ENCODE measurements at regions of chr1 and their contacts with region 1.

Region 1: GRCh38 chr1:154220071-154220969 is at the start of gene UBAP2L:
- DNase-seq: peak; percentile 92 to 99 (median 99)
- ATAC-seq: peak; percentile 91
- H3K4me3 ChIP-seq: peak within 1 kb of the TSS; percentile 95
- H3K4me3 Mint-ChIP-seq: peak within 1 kb of the TSS; percentile 83 to 100 (median 98)
- H3K27ac ChIP-seq: peak within 1 kb of the TSS; percentile 99
- H3K27ac Mint-ChIP-seq: peak within 1 kb of the TSS; percentile 96 to 100 (median 99)
- H3K4me1 ChIP-seq: peaks cover 42 to 45% of the 10 kb centered on the region in 2 donors
- H3K4me1 Mint-ChIP-seq: peaks cover 46 to 76% (median 64%) of the 10 kb centered on the region in 7 donors
- H3K27me3 ChIP-seq: no peaks in the 10 kb centered on the region
- H3K27me3 Mint-ChIP-seq: peaks cover 0 to 4% (median 0%) of the 10 kb centered on the region in 5 donors
- total RNA-seq, gene UBAP2L: 183 to 235 (median 189) TPM

Region 2: GRCh38 chr1:152960452-152961044 is 1259.8 kb before region 1 on chr1:
- CTCF ChIA-PET with region 1: no interaction called
- POLR2A ChIA-PET with region 1: no interaction called
- intact Hi-C with region 1: no loop called
- DNase-seq: no peak
- ATAC-seq: no peak
- H3K4me3 ChIP-seq: no peak overlapping the region
- H3K4me3 Mint-ChIP-seq: no peak overlapping the region
- H3K27ac ChIP-seq: no peak overlapping the region
- H3K27ac Mint-ChIP-seq: no peak overlapping the region
- H3K4me1 ChIP-seq: no peaks in the 10 kb centered on the region
- H3K4me1 Mint-ChIP-seq: no peaks in the 10 kb centered on the region
- H3K27me3 ChIP-seq: no peaks in the 10 kb centered on the region
- H3K27me3 Mint-ChIP-seq: peaks cover 0 to 26% (median 10%) of the 10 kb centered on the region in 5 donors

Region 3: GRCh38 chr1:153633716-153634665 is 586.3 kb before region 1 on chr1 and contains the start of gene CHTOP:
- CTCF ChIA-PET with region 1: no interaction called
- POLR2A ChIA-PET with region 1: interaction called, 4 read pairs
- intact Hi-C with region 1: loop called in 1 of 2 experiments (anchors 1 kb)
- DNase-seq: peak; percentile 96 to 99 (median 96)
- ATAC-seq: peak; percentile 95
- H3K4me3 ChIP-seq: peak within 1 kb of the TSS; percentile 99
- H3K4me3 Mint-ChIP-seq: peak within 1 kb of the TSS; percentile 97 to 100 (median 99)
- H3K27ac ChIP-seq: peak within 1 kb of the TSS; percentile 98
- H3K27ac Mint-ChIP-seq: peak within 1 kb of the TSS; percentile 98 to 100 (median 100)
- H3K4me1 ChIP-seq: peaks cover 11 to 25% of the 10 kb centered on the region in 2 donors
- H3K4me1 Mint-ChIP-seq: peaks cover 30 to 52% (median 41%) of the 10 kb centered on the region in 7 donors
- H3K27me3 ChIP-seq: no peaks in the 10 kb centered on the region
- H3K27me3 Mint-ChIP-seq: peaks cover 0 to 3% (median 0%) of the 10 kb centered on the region in 5 donors
- total RNA-seq, gene CHTOP: 85.2 to 143 (median 116) TPM

Region 4: GRCh38 chr1:153775458-153776327 is 444.6 kb before region 1 on chr1:
- CTCF ChIA-PET with region 1: no interaction called
- POLR2A ChIA-PET with region 1: no interaction called
- intact Hi-C with region 1: loop called in 1 of 2 experiments (anchors 2 kb)
- DNase-seq: peak; percentile 40 to 63 (median 59)
- ATAC-seq: peak; percentile 76
- H3K4me3 ChIP-seq: peak overlapping the region; percentile 73
- H3K4me3 Mint-ChIP-seq: peak overlapping the region; percentile 77 to 89 (median 86)
- H3K27ac ChIP-seq: peak overlapping the region; percentile 66
- H3K27ac Mint-ChIP-seq: peak overlapping the region in 7 of 9 donors; percentile 29 to 80 (median 68)
- H3K4me1 ChIP-seq: peaks cover 6 to 23% of the 10 kb centered on the region in 2 donors
- H3K4me1 Mint-ChIP-seq: peaks cover 14 to 35% (median 26%) of the 10 kb centered on the region in 7 donors
- H3K27me3 ChIP-seq: no peaks in the 10 kb centered on the region
- H3K27me3 Mint-ChIP-seq: no peaks in the 10 kb centered on the region

Region 5: GRCh38 chr1:153958111-153958960 is 262.0 kb before region 1 on chr1 and contains the start of gene CRTC2:
- CTCF ChIA-PET with region 1: no interaction called
- POLR2A ChIA-PET with region 1: interaction called, 3 read pairs
- intact Hi-C with region 1: loop called in 1 of 2 experiments (anchors 1 kb)
- DNase-seq: peak; percentile 86 to 99 (median 96)
- ATAC-seq: peak; percentile 94
- H3K4me3 ChIP-seq: peak within 1 kb of the TSS; percentile 74
- H3K4me3 Mint-ChIP-seq: peak within 1 kb of the TSS; percentile 91 to 100 (median 97)
- H3K27ac ChIP-seq: peak within 1 kb of the TSS; percentile 92
- H3K27ac Mint-ChIP-seq: peak within 1 kb of the TSS; percentile 89 to 98 (median 94)
- H3K4me1 ChIP-seq: peaks cover 36% of the 10 kb centered on the region in 2 donors
- H3K4me1 Mint-ChIP-seq: peaks cover 34 to 71% (median 67%) of the 10 kb centered on the region in 7 donors
- H3K27me3 ChIP-seq: no peaks in the 10 kb centered on the region
- H3K27me3 Mint-ChIP-seq: no peaks in the 10 kb centered on the region
- total RNA-seq, gene CRTC2: 86.1 to 157 (median 119) TPM

Region 6: DNA sequence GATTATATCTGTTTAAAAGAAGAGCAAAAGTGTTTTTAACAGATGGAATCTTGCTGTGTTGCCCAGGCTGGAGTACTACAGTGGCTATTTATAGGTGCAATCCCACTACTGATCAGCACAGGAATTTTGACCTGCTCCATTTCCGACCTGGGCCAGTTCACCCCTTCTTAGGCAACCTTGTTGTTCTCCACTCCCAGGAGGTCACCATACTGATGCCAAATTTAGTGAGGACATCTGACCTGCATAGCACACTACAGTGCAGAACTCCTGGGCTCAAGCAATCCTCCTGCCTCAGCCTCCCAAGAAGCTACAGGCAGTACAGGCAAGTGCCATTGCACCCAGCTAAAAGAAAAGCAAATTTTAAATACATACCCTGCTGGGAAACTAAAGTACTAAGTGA is 54.1 kb before region 1 on chr1:
- CTCF ChIA-PET with region 1: no interaction called
- POLR2A ChIA-PET with region 1: no interaction called
- intact Hi-C with region 1: no loop called
- DNase-seq: no peak
- ATAC-seq: no peak
- H3K4me3 ChIP-seq: no peak overlapping the region
- H3K4me3 Mint-ChIP-seq: no peak overlapping the region
- H3K27ac ChIP-seq: no peak overlapping the region
- H3K27ac Mint-ChIP-seq: peak overlapping the region in 3 of 9 donors; percentile 33 to 56 (median 51)
- H3K4me1 ChIP-seq: peaks cover 0 to 4% of the 10 kb centered on the region in 2 donors
- H3K4me1 Mint-ChIP-seq: peaks cover 7 to 48% (median 40%) of the 10 kb centered on the region in 7 donors
- H3K27me3 ChIP-seq: no peaks in the 10 kb centered on the region
- H3K27me3 Mint-ChIP-seq: no peaks in the 10 kb centered on the region

Region 7: GRCh38 chr1:154198756-154199562 is 21.4 kb before region 1 on chr1:
- CTCF ChIA-PET with region 1: interaction called, 6 read pairs
- POLR2A ChIA-PET with region 1: interaction called, 4 read pairs
- intact Hi-C with region 1: loop called in 1 of 2 experiments (anchors 1 kb)
- DNase-seq: peak in 7 of 9 donors; percentile 44 to 66 (median 61)
- ATAC-seq: peak; percentile 91
- H3K4me3 ChIP-seq: no peak overlapping the region
- H3K4me3 Mint-ChIP-seq: no peak overlapping the region
- H3K27ac ChIP-seq: no peak overlapping the region
- H3K27ac Mint-ChIP-seq: peak overlapping the region in 1 of 9 donors; percentile 69
- H3K4me1 ChIP-seq: no peaks in the 10 kb centered on the region
- H3K4me1 Mint-ChIP-seq: peaks cover 0 to 4% (median 0%) of the 10 kb centered on the region in 7 donors
- H3K27me3 ChIP-seq: no peaks in the 10 kb centered on the region
- H3K27me3 Mint-ChIP-seq: peaks cover 0 to 7% (median 0%) of the 10 kb centered on the region in 5 donors

Region 8: DNA sequence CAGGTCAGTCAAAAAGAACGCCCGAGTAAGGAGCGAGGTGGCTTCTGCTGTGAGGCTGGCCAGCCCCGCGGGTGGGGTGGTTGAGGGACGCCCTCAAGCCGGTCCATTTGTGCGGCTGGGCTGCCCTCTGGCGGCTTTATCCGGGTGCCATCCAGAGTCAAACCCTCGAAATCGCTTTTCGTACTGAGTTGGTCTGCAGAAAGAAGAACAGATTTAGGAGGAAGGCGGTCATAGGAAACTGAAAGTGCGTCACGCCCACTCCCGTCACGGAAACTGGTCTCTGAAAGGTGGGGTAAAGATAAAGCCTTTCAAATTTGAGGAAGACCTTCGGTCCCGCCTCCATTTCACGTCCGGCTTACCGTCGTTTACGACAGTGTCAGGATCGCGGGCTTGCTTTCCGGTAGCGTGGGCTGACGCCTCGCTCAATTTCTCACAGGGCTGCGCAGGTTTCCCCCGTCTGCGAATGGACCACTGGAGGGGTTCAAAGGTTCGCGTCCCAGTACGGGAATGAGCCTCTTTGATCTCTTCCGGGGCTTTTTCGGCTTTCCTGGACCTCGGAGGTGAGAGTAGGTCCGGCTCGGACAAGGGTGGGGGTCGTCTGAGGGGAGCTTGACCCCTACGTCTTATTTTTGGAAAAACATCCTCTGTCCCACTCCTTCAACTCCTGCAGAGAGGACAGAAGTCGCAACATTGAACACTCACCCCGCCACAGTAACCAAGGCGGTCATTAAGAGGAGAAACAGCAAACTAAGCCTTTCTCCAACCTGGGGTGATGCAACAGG is 52.1 kb after region 1 on chr1 and contains the start of gene HAX1:
- CTCF ChIA-PET with region 1: interaction called, 3 read pairs
- POLR2A ChIA-PET with region 1: interaction called, 6 read pairs
- intact Hi-C with region 1: loop called (anchors 1 kb)
- DNase-seq: peak; percentile 74 to 99 (median 97)
- ATAC-seq: peak; percentile 95
- H3K4me3 ChIP-seq: peak within 1 kb of the TSS; percentile 98
- H3K4me3 Mint-ChIP-seq: peak within 1 kb of the TSS; percentile 94 to 99 (median 97)
- H3K27ac ChIP-seq: peak within 1 kb of the TSS; percentile 92
- H3K27ac Mint-ChIP-seq: peak within 1 kb of the TSS; percentile 97 to 99 (median 99)
- H3K4me1 ChIP-seq: peaks cover 10 to 20% of the 10 kb centered on the region in 2 donors
- H3K4me1 Mint-ChIP-seq: peaks cover 20 to 47% (median 42%) of the 10 kb centered on the region in 7 donors
- H3K27me3 ChIP-seq: no peaks in the 10 kb centered on the region
- H3K27me3 Mint-ChIP-seq: no peaks in the 10 kb centered on the region
- total RNA-seq, gene HAX1: 71.9 to 111 (median 104) TPM

Region 9: DNA sequence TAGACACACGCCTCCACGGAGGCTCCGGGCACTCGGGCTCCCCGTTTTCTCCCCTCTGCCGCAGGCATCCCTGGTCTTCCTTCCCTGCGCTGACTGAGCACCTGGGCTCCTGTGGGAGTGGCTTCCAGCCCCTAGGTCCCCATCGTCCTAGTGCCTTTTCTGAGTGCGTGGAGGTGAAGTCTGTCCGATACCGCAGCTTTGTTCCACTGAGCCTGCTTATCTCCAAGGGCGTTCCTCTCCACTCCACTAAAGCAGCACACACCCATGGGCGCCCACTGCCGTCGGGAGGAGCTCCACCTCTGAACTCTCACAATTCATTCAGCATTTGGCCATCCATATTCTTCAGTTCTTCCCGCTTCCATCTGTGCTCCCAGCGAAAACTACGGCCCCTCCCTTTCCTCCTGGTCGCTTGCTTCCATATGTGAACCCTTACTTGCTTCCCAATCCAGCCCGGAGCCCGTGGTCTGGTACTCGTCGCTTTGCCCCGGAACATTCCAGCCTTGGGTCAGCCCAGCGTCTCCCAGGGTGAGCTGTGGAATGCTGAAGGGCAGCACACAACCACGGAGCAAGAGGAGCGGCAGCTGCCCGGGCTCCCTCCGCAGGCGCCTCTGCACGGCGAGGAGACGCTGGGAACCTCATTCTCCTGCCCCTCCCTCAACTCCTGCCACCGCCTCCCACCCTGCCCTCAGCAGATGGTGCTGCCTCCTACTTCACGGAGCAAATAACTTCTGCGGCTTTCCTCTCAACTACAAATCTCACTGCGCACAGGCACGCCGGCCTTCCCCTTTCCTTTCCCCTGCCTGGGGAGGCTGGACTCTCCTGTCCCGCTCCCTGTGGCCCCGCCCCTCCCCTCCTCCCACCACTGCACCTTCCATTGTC is 132.5 kb after region 1 on chr1:
- CTCF ChIA-PET with region 1: no interaction called
- POLR2A ChIA-PET with region 1: no interaction called
- intact Hi-C with region 1: no loop called
- DNase-seq: peak in 8 of 9 donors; percentile 45 to 58 (median 52)
- ATAC-seq: peak; percentile 84
- H3K4me3 ChIP-seq: peak overlapping the region; percentile 79
- H3K4me3 Mint-ChIP-seq: peak overlapping the region; percentile 76 to 98 (median 91)
- H3K27ac ChIP-seq: peak overlapping the region; percentile 74
- H3K27ac Mint-ChIP-seq: peak overlapping the region; percentile 66 to 97 (median 88)
- H3K4me1 ChIP-seq: peaks cover 13 to 32% of the 10 kb centered on the region in 2 donors
- H3K4me1 Mint-ChIP-seq: peaks cover 29 to 64% (median 48%) of the 10 kb centered on the region in 7 donors
- H3K27me3 ChIP-seq: no peaks in the 10 kb centered on the region
- H3K27me3 Mint-ChIP-seq: peaks cover 0 to 2% (median 0%) of the 10 kb centered on the region in 5 donors

Region 10: DNA sequence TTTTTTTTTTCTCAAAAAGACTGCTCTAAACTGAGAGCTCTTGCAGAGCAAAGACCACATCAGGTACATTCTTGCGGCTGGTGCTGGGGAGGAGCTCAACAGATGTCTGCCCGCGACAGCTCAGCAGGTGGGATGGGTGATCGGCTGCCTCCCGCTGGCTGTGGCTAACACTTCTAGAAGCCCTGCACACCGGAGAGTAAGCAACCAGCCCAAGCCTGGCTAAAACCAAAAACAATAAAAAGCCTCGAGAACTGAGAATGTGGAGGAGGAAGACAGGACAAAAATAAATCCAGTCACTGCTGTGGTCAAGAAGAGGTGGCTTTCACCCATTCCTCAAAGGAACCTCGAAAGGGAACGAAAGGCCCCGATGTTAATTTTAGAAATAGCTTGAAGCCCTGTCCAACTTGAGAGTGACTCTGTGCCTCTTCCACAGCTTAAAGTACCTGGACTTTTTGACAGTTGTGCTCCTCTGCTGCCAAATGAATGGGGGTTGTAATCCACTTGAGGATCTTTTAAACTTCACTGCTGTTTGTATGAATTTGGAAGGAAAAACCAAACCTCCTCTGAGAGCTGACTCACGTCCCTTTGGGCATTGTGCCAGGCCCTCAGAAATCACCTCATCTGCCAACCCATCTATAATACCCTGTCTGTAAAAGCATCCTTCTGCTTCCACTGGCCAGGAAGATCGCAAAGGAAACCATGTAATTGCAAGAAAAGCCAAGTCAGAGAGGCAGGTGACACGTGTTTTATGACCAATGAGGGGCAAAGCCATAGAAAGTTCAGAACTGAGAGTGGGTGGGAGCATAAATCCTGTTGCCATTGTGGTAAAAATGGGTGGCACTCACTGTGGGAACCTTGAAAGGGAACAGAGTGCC is 571.2 kb after region 1 on chr1:
- CTCF ChIA-PET with region 1: no interaction called
- POLR2A ChIA-PET with region 1: no interaction called
- intact Hi-C with region 1: loop called in 1 of 2 experiments (anchors 2 kb)
- DNase-seq: peak; percentile 46 to 94 (median 91)
- ATAC-seq: peak; percentile 99
- H3K4me3 ChIP-seq: peak overlapping the region; percentile 6
- H3K4me3 Mint-ChIP-seq: peak overlapping the region; percentile 63 to 83 (median 78)
- H3K27ac ChIP-seq: peak overlapping the region; percentile 38
- H3K27ac Mint-ChIP-seq: peak overlapping the region; percentile 59 to 95 (median 84)
- H3K4me1 ChIP-seq: peaks cover 22 to 23% of the 10 kb centered on the region in 2 donors
- H3K4me1 Mint-ChIP-seq: peaks cover 18 to 56% (median 40%) of the 10 kb centered on the region in 7 donors
- H3K27me3 ChIP-seq: no peaks in the 10 kb centered on the region
- H3K27me3 Mint-ChIP-seq: peaks cover 0 to 23% (median 0%) of the 10 kb centered on the region in 5 donors

Measured in naive thymus-derived CD4-positive, alpha-beta T cell (primary cell).